K562 (cell line): ENCODE measurements at regions of chr6 and their contacts with region 1.

Region 1: GRCh38 chr6:15893556-15894268 is 230.9 kb upstream of the DTNBP1 start:
- DNase-seq: peak; percentile 61 to 81 (median 70)
- ATAC-seq: 0 out of 3 replicates have a peak, but pooled peaks have one; percentile 9
- H3K4me3 ChIP-seq: no peak overlapping the region
- H3K27ac ChIP-seq: 0 out of 3 replicates have a peak overlapping the region, but pooled peaks have one; percentile 6
- H3K4me1 ChIP-seq: peaks cover 14 to 51% of the 10 kb centered on the region in 2 experiments
- H3K27me3 ChIP-seq: no peaks in the 10 kb centered on the region
- CTCF ChIP-seq: peak; percentile 58 to 85 (median 72); a peak in 5 of 6 replicates
- EP300 ChIP-seq: peak; percentile 26; the same call in 1 of the 2 replicates
- POLR2A ChIP-seq: no peak
- RAD21 ChIP-seq: peak; percentile 77 to 93

Region 2: GRCh38 chr6:16004934-16005679 is 111.4 kb after region 1 on chr6:
- CTCF ChIA-PET with region 1: no interaction called
- POLR2A ChIA-PET with region 1: no interaction called
- in situ Hi-C with region 1: no loop called
- intact Hi-C with region 1: loop called (anchors 5 kb)
- DNase-seq: peak; percentile 73 to 88 (median 76)
- ATAC-seq: peak; percentile 83
- H3K4me3 ChIP-seq: no peak overlapping the region
- H3K27ac ChIP-seq: peak overlapping the region; percentile 78
- H3K4me1 ChIP-seq: peaks cover 49 to 80% of the 10 kb centered on the region in 2 experiments
- H3K27me3 ChIP-seq: no peaks in the 10 kb centered on the region
- CTCF ChIP-seq: no peak
- EP300 ChIP-seq: peak; percentile 82
- POLR2A ChIP-seq: no peak
- RAD21 ChIP-seq: peak in 1 of 2 experiments; percentile 15

Region 3: DNA sequence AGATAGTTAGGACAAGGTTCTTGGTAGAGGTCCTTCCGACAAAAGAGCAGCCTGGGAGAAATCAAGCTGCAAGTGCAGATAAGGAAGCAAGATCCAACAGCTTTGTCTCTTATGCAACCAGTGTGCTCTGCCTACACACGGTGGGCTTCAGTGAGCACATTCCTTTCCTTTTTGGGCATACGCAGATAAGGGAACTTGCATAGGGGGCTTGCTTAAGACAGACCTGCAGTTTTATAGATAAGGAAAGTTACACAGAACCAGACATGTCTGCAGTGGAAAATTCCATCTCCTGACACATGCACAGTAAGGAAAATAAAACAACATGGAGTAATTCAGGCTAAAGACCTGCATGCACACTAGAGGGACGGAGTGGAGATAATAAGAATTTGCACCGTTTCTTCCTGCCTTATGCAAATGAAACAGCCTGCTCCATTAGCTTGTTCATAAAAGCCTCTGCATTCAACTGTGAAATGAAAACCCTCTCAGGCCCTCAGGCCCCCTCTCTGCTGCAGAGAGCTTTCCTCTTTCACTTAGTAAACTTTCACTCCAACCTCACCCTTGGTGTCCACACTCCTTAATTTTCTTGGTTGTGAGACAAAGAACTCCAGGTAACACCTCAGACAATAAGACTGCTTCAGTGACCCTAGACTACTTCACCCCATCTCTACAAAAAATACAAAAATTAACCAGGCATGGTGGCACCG is 137.7 kb after region 1 on chr6:
- CTCF ChIA-PET with region 1: no interaction called
- POLR2A ChIA-PET with region 1: no interaction called
- in situ Hi-C with region 1: no loop called
- intact Hi-C with region 1: loop called (anchors 2 kb)
- DNase-seq: peak; percentile 93 to 98 (median 94)
- ATAC-seq: peak; percentile 97
- H3K4me3 ChIP-seq: no peak overlapping the region
- H3K27ac ChIP-seq: peak overlapping the region; percentile 83
- H3K4me1 ChIP-seq: peaks cover 10 to 33% of the 10 kb centered on the region in 2 experiments
- H3K27me3 ChIP-seq: no peaks in the 10 kb centered on the region
- CTCF ChIP-seq: no peak; a peak in 1 of 6 replicates
- EP300 ChIP-seq: peak; percentile 100
- POLR2A ChIP-seq: no peak
- RAD21 ChIP-seq: peak; percentile 38 to 62